Dorsolateral prefrontal cortex (tissue), 120 donors: ENCODE measurements at regions of chr5 and their contacts with region 1.

Region 1: DNA sequence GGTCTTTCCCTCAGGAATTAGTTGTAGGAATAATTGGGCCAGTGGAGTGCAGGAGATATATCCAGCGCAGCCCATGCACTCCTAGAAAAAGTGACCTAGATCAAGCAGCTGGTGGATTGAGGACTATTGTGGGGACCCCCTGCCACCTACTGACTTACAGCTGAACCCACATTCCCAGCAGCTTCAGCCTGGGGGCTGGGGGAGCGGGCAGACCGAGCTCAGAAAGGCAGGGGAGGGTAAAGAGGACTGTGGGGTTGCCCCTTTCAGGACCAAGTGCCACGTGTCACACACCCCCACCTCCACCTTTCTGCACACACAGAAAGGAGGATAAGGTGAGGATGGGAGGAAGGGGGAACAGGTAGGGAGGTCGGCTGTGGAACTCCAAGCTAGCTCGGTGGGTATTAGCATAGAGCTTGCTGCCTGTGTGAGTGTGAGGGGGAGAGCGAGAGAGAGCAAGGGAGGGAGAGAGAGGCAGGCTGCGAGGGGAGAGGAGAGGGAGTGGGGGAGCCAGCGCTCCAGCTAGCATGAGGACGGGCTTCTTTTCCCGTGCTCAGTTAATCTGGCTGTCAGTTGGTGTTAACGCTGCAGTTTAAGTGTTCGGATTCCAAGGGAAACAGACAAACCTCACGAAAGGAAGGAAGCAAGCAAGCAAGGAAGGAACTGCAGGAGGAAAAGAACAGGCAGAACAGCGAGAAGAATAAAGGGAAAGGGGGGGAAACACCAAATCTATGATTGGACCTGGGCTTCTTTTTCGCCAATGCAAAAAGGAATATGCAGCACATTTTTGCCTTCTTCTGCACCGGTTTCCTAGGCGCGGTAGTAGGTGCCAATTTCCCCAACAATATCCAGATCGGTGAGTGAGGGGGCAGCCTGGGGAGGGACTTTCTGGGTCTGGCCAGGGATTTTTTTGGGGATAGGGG is at the start of gene GRIA1:
- DNase-seq: peak in 7 of 10 donors; percentile 14 to 67 (median 56)
- H3K4me3 ChIP-seq: peak within 1 kb of the TSS in 58 of 59 donors; percentile 35 to 75 (median 60)
- H3K27ac ChIP-seq: peak within 1 kb of the TSS in 56 of 59 donors; percentile 28 to 91 (median 76)
- H3K27me3 ChIP-seq: peaks cover 0 to 33% (median 0%) of the 10 kb centered on the region in 45 donors
- CTCF ChIP-seq: peak in 4 of 56 donors; percentile 9 to 18 (median 16)
- total RNA-seq, gene GRIA1: 36.1 to 169 (median 98.1) TPM

Region 2: GRCh38 chr5:152634586-152634985 is 855.8 kb before region 1 on chr5:
- intact Hi-C with region 1: loop called in 1 of 2 experiments (anchors 5 kb)
- DNase-seq: peak in 7 of 10 donors; percentile 33 to 79 (median 53)
- H3K4me3 ChIP-seq: no peak overlapping the region
- H3K27ac ChIP-seq: peak overlapping the region in 10 of 59 donors; percentile 2 to 46 (median 24)
- H3K27me3 ChIP-seq: no peaks in the 10 kb centered on the region
- CTCF ChIP-seq: no peak

Region 3: DNA sequence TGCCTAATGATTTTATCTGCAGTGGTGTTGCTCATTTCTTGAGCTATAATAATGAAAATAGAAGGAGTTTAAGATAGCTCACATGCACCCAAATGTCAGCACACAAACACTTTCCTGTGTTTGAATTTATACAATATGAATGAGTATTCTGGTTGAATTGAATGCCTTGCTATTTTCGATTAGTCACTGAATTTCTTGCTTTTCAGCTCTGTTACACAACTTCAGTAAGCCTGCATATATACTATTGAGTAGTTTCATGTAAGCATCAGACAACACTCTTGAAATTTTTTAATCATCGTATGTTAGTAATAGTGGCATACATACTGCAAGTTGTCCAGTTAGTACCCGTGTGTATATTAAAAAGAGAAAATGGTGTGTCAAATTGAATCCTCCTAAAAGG is 281.4 kb before region 1 on chr5:
- intact Hi-C with region 1: loop called in 1 of 2 experiments (anchors 5 kb)
- DNase-seq: no peak
- H3K4me3 ChIP-seq: no peak overlapping the region
- H3K27ac ChIP-seq: no peak overlapping the region
- H3K27me3 ChIP-seq: peaks cover 0 to 7% (median 0%) of the 10 kb centered on the region in 45 donors
- CTCF ChIP-seq: no peak

Region 4: GRCh38 chr5:153372425-153373129 is 117.8 kb before region 1 on chr5:
- intact Hi-C with region 1: no loop called
- DNase-seq: no peak
- H3K4me3 ChIP-seq: no peak overlapping the region
- H3K27ac ChIP-seq: no peak overlapping the region
- H3K27me3 ChIP-seq: no peaks in the 10 kb centered on the region
- CTCF ChIP-seq: no peak